Activated CD8-positive, alpha-beta T cell treated with anti-CD3 and anti-CD28 coated beads, Interleukin-2, amount 10 ng/mL, durations not matched to agents 7 days and 5 days (primary cell): ENCODE measurements at regions of chr1 and their contacts with region 1.

Region 1: DNA sequence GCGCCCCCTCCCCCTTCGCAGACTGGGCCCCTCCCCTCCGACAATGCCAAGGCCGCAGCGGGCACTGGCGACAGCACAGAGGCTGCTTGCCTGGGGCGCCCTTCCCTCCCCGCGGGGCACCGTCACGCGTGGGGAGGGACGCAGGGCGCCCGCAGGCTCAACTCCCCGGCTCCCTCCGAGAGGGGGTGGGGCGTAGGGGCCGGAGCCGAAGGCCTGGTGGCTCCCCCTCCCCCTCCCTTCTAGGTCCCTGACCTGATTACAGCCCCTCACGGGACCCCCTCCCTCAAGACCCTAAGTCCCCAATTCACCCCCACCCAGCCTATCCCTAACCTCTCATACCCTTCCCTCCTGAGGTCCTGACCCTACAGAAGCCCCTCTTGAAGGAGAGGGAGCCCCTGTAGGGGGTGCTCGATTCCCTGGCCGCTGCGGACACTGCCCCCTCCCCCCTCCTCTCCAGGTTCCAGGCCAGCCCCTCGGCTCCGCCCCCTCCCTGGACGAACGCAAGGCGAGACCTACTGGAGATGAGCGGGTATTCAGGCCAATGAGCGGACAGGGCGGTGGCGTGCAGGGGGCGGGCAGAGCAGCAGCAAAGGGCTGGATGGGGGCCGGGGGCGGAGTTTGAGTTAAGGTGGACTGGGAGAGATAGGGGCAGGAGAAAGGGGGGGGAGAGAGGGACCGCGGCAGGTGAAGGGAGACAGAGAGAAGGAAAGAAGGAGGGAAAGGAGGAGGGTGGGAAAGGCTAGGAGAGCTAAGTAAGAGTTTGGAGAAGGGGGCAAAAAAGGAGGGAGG is 733 bp upstream of the ZBTB7B start:
- DNase-seq: peak; percentile 100
- ATAC-seq: peak; percentile 76
- H3K4me3 Mint-ChIP-seq: peak overlapping the region; percentile 86
- H3K27ac Mint-ChIP-seq: peak overlapping the region; percentile 97
- H3K4me1 Mint-ChIP-seq: peaks cover 62% of the 10 kb centered on the region
- H3K27me3 Mint-ChIP-seq: no peaks in the 10 kb centered on the region

Region 2: GRCh38 chr1:154955718-154956543 is 45.9 kb before region 1 on chr1 and contains the start of gene PBXIP1:
- CTCF ChIA-PET with region 1: interaction called, 51 read pairs
- POLR2A ChIA-PET with region 1: interaction called, 11 read pairs
- DNase-seq: peak; percentile 91
- ATAC-seq: peak; percentile 47
- H3K4me3 Mint-ChIP-seq: peak within 1 kb of the TSS; percentile 91
- H3K27ac Mint-ChIP-seq: peak within 1 kb of the TSS; percentile 96
- H3K4me1 Mint-ChIP-seq: peaks cover 80% of the 10 kb centered on the region
- H3K27me3 Mint-ChIP-seq: no peaks in the 10 kb centered on the region
- total RNA-seq, gene PBXIP1: 44.5 to 48.2 TPM

Region 3: GRCh38 chr1:154974063-154974807 is 27.6 kb before region 1 on chr1 and contains the start of gene CKS1B:
- CTCF ChIA-PET with region 1: interaction called, 139 read pairs
- POLR2A ChIA-PET with region 1: interaction called, 8 read pairs
- DNase-seq: peak; percentile 98
- ATAC-seq: peak; percentile 91
- H3K4me3 Mint-ChIP-seq: no peak within 1 kb of the TSS
- H3K27ac Mint-ChIP-seq: no peak within 1 kb of the TSS
- H3K4me1 Mint-ChIP-seq: peaks cover 40% of the 10 kb centered on the region
- H3K27me3 Mint-ChIP-seq: no peaks in the 10 kb centered on the region
- total RNA-seq, gene CKS1B: 151 to 153 TPM

Region 4: GRCh38 chr1:155012026-155012546 is 10.2 kb after region 1 on chr1:
- CTCF ChIA-PET with region 1: interaction called, 71 read pairs
- POLR2A ChIA-PET with region 1: interaction called, 4 read pairs
- DNase-seq: no peak
- ATAC-seq: no peak
- H3K4me3 Mint-ChIP-seq: no peak overlapping the region
- H3K27ac Mint-ChIP-seq: peak overlapping the region; percentile 34
- H3K4me1 Mint-ChIP-seq: peaks cover 85% of the 10 kb centered on the region
- H3K27me3 Mint-ChIP-seq: no peaks in the 10 kb centered on the region

Region 5: GRCh38 chr1:155050560-155051341 is 48.9 kb after region 1 on chr1 and contains the start of gene ADAM15:
- CTCF ChIA-PET with region 1: interaction called, 18 read pairs
- POLR2A ChIA-PET with region 1: interaction called, 3 read pairs
- DNase-seq: peak; percentile 81
- ATAC-seq: peak; percentile 89
- H3K4me3 Mint-ChIP-seq: peak within 1 kb of the TSS; percentile 83
- H3K27ac Mint-ChIP-seq: peak within 1 kb of the TSS; percentile 85
- H3K4me1 Mint-ChIP-seq: peaks cover 31% of the 10 kb centered on the region
- H3K27me3 Mint-ChIP-seq: peaks cover under 1% of the 10 kb centered on the region
- total RNA-seq, gene ADAM15: 29.7 to 29.8 TPM